WTC11 (cell line): ENCODE measurements at regions of chr9 and their contacts with region 1.

Region 1: GRCh38 chr9:129626079-129626624 is at the start of gene NTMT1:
- DNase-seq: peak; percentile 84
- ATAC-seq: peak; percentile 49
- H3K4me3 Mint-ChIP-seq: peak within 1 kb of the TSS; percentile 85
- H3K27ac Mint-ChIP-seq: peak within 1 kb of the TSS; percentile 65
- H3K4me1 Mint-ChIP-seq: peaks cover 50% of the 10 kb centered on the region
- H3K27me3 Mint-ChIP-seq: peaks cover 18% of the 10 kb centered on the region
- CTCF ChIP-seq: no peak
- total RNA-seq, gene NTMT1: 55.4 to 71.1 TPM (median 58.1 TPM) in 3 replicates

Region 2: GRCh38 chr9:129139993-129140396 is 486.2 kb before region 1 on chr9:
- CTCF ChIA-PET with region 1: interaction called, 60 read pairs
- POLR2A ChIA-PET with region 1: interaction called, 4 read pairs
- DNase-seq: peak; percentile 70
- ATAC-seq: peak; percentile 58
- H3K4me3 Mint-ChIP-seq: peak overlapping the region; percentile 66
- H3K27ac Mint-ChIP-seq: peak overlapping the region; percentile 97
- H3K4me1 Mint-ChIP-seq: peaks cover 62% of the 10 kb centered on the region
- H3K27me3 Mint-ChIP-seq: no peaks in the 10 kb centered on the region
- CTCF ChIP-seq: no peak

Region 3: DNA sequence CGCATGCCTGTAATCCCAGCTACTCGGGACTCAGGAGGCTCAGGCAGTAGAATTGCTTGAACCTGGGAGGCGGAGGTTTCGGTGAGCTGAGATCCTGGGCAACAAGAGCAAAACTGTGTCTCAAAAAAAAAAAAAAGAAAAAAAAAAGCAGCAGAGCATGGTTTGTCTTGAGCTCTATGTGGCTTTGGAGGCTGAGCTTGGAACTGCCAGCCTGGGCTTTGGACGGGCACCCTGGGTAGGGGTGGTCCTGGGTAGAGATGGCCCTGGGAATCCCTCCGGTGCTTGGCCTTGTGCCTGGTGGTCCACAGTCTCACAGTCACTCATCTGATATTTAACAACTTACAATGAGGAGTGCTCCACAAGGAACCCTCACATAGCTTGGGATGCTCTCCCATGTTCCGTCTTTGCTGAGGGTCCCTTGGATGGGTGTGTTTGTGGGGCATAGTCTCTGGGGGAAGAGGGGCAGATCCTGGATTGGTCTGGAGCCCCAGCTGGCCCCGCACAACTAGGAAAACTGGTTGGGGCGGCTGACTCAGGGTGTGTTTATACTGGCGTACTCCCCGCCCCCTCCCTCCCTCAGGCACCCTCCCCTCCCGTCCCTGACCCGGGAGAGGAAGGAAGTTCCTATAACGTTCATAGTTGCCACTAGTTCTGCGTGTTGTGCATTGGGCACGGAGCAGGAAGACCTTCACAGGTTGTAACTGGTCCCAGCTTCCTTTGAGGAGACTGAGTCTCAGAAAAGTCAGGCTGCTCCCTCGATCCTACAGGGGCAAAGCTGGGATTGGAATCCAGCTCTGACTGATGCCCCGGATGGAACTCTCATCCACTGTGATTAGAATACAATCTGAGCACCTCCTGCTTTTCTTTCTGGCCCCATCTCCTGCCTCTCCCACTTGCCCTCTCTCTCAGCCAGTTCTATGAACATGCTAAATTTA is 459.3 kb before region 1 on chr9:
- CTCF ChIA-PET with region 1: interaction called, 53 read pairs
- POLR2A ChIA-PET with region 1: interaction called, 7 read pairs
- DNase-seq: peak; percentile 67
- ATAC-seq: peak; percentile 77
- H3K4me3 Mint-ChIP-seq: peak overlapping the region; percentile 60
- H3K27ac Mint-ChIP-seq: peak overlapping the region; percentile 78
- H3K4me1 Mint-ChIP-seq: peaks cover 36% of the 10 kb centered on the region
- H3K27me3 Mint-ChIP-seq: peaks cover 12% of the 10 kb centered on the region
- CTCF ChIP-seq: no peak

Region 4: GRCh38 chr9:129460323-129461261 is 165.6 kb before region 1 on chr9:
- CTCF ChIA-PET with region 1: interaction called, 20 read pairs
- POLR2A ChIA-PET with region 1: no interaction called
- DNase-seq: peak; percentile 82
- ATAC-seq: peak; percentile 69
- H3K4me3 Mint-ChIP-seq: peak overlapping the region; percentile 76
- H3K27ac Mint-ChIP-seq: no peak overlapping the region
- H3K4me1 Mint-ChIP-seq: peaks cover 23% of the 10 kb centered on the region
- H3K27me3 Mint-ChIP-seq: peaks cover 22% of the 10 kb centered on the region
- CTCF ChIP-seq: no peak

Region 5: GRCh38 chr9:129597355-129598088 is 28.6 kb before region 1 on chr9:
- CTCF ChIA-PET with region 1: interaction called, 17 read pairs
- POLR2A ChIA-PET with region 1: no interaction called
- DNase-seq: peak; percentile 74
- ATAC-seq: peak; percentile 29
- H3K4me3 Mint-ChIP-seq: peak overlapping the region; percentile 56
- H3K27ac Mint-ChIP-seq: no peak overlapping the region
- H3K4me1 Mint-ChIP-seq: peaks cover 44% of the 10 kb centered on the region
- H3K27me3 Mint-ChIP-seq: peaks cover 52% of the 10 kb centered on the region
- CTCF ChIP-seq: no peak

Region 6: DNA sequence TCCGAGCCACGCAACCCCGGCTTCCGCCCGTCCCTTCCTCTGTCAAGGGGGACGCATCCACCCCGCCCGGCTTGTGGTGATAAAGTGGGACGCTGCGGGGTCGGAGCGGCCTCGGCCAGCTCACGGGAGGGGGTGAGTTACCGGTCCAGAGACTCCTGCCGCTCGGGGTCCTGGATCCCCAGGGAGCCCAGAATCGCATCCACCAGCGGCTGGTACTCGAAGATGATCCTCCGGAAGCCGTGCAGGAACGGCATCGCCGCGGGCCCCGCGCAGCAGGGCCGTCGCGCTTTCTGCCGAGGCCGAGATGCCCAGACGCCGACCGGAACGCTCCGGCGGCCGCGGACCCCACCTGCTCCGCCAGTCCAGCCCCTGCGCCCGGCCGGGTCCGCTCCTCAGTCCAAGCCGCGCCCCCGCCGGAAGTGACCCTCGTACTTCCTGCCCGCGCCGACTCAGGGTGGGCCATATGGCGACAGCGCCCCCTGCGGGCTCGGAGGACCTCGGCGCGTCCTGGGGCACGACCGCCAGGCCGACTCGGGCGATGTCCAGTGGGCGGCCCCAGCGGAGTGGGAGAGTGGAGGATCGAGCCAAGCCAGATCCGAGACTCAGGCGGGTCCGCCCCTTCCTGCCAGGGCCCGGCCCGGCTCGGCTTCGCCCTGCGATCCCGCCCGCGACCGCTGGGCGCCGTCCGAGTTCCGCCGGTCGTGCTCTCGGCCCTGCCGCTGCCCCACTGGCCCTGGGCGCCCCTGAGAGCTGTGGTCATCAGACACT is 15.8 kb after region 1 on chr9 and contains the start of gene ASB6:
- CTCF ChIA-PET with region 1: interaction called, 24 read pairs
- POLR2A ChIA-PET with region 1: no interaction called
- DNase-seq: peak; percentile 99
- ATAC-seq: peak; percentile 98
- H3K4me3 Mint-ChIP-seq: peak within 1 kb of the TSS; percentile 79
- H3K27ac Mint-ChIP-seq: peak within 1 kb of the TSS; percentile 92
- H3K4me1 Mint-ChIP-seq: peaks cover 14% of the 10 kb centered on the region
- H3K27me3 Mint-ChIP-seq: no peaks in the 10 kb centered on the region; the same call in 1 of the 2 replicates
- CTCF ChIP-seq: peak; percentile 97
- total RNA-seq, gene ASB6: 19.3 to 20.0 TPM (median 19.7 TPM) in 3 replicates

Region 7: GRCh38 chr9:129726322-129727160 is 100.4 kb after region 1 on chr9:
- CTCF ChIA-PET with region 1: interaction called, 10 read pairs
- POLR2A ChIA-PET with region 1: no interaction called
- DNase-seq: peak; percentile 89
- ATAC-seq: peak; percentile 99
- H3K4me3 Mint-ChIP-seq: 0 out of 2 replicates have a peak overlapping the region, but pooled peaks have one; percentile 13
- H3K27ac Mint-ChIP-seq: no peak overlapping the region
- H3K4me1 Mint-ChIP-seq: peaks cover 6% of the 10 kb centered on the region
- H3K27me3 Mint-ChIP-seq: no peaks in the 10 kb centered on the region
- CTCF ChIP-seq: peak; percentile 95